Activated B cell treated with CpG ODN at 0.5 μM for 24 hours (primary cell): ENCODE measurements at regions of chr2 and their contacts with region 1.

Region 1: GRCh38 chr2:75466708-75467311 is 93.9 kb downstream of the EVA1A start:
- DNase-seq: peak; percentile 17
- ATAC-seq: no peak
- H3K4me3 Mint-ChIP-seq: no peak overlapping the region
- H3K27ac Mint-ChIP-seq: no peak overlapping the region
- H3K4me1 Mint-ChIP-seq: peaks cover 3% of the 10 kb centered on the region
- H3K27me3 Mint-ChIP-seq: peaks cover 13% of the 10 kb centered on the region
- CTCF ChIP-seq: peak; percentile 77

Region 2: DNA sequence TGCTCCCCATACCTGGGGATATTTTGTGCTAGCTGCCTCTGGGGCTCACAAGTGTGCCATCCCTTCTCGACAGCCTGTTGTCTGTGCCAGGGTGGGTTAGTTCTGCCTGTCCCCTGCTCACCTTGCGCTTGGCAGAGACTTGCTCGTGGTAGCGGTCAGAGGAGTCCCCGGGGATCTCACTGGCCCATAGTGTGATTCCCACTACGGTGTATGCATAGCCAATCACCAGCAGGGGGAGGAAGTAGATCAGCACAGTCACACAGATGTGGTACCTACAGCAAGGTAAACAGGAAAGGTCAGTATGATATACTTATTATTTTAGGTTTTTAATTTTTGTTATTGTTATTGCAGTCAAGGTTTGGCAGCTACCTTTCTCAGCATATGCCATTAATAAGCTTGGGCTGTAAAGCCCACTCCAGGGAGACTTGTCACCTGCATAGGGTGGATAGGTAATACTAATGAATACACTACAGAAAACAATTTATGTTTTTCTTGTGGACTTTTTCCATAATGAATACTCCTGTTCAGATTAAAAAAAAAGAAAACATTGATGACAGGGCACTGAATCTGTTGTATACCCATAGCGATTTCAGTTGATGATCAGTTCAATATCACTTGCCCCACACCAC is 413.2 kb before region 1 on chr2:
- CTCF ChIA-PET with region 1: interaction called, 3 read pairs
- POLR2A ChIA-PET with region 1: no interaction called
- intact Hi-C with region 1: loop called (anchors 1 kb)
- DNase-seq: no peak
- ATAC-seq: peak; percentile 62
- H3K4me3 Mint-ChIP-seq: no peak overlapping the region
- H3K27ac Mint-ChIP-seq: no peak overlapping the region
- H3K4me1 Mint-ChIP-seq: no peaks in the 10 kb centered on the region
- H3K27me3 Mint-ChIP-seq: no peaks in the 10 kb centered on the region
- CTCF ChIP-seq: no peak

Region 3: DNA sequence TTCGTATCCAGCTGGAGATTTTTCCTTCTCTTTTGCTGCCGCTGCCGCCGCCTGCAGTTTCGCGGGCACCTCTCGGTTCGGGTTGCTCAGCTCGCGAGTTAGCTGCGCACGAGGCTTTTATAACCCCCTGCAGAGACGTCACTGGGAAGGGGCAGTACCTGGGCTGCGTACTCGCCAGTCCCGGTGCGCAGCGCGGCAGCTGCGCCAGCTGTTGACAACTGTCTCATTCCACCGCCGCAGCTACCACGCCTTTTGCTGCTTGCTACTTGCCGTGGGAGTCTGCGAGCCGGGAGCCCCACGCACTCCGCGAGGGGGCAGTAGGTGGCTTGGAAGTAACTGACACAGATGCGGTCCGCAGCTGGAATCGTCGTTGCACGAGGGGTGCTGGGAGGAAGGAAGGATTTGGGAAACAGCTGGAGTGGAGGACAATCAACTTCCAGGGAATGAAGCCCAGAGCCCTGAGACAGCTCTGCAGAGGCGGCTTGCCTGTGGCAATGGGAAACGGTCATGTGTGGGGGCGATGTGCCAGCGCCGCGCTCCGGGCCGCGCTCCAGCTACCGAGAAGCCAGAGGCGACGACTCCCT is 267.3 kb before region 1 on chr2 and contains the start of gene TACR1:
- CTCF ChIA-PET with region 1: interaction called, 44 read pairs
- POLR2A ChIA-PET with region 1: no interaction called
- intact Hi-C with region 1: loop called (anchors 1 kb)
- DNase-seq: peak; percentile 55
- ATAC-seq: peak; percentile 79
- H3K4me3 Mint-ChIP-seq: peak within 1 kb of the TSS; percentile 81
- H3K27ac Mint-ChIP-seq: no peak within 1 kb of the TSS
- H3K4me1 Mint-ChIP-seq: peaks cover 20% of the 10 kb centered on the region
- H3K27me3 Mint-ChIP-seq: peaks cover 61% of the 10 kb centered on the region
- CTCF ChIP-seq: peak; percentile 43
- total RNA-seq, gene TACR1: not detected in 2 replicates

Region 4: GRCh38 chr2:75432761-75433361 is 33.9 kb before region 1 on chr2:
- CTCF ChIA-PET with region 1: interaction called, 6 read pairs
- POLR2A ChIA-PET with region 1: no interaction called
- intact Hi-C with region 1: loop called (anchors 2 kb)
- DNase-seq: peak; percentile 24
- ATAC-seq: peak; percentile 69
- H3K4me3 Mint-ChIP-seq: peak overlapping the region; percentile 60
- H3K27ac Mint-ChIP-seq: peak overlapping the region; percentile 83
- H3K4me1 Mint-ChIP-seq: peaks cover 57% of the 10 kb centered on the region
- H3K27me3 Mint-ChIP-seq: no peaks in the 10 kb centered on the region
- CTCF ChIP-seq: no peak

Region 5: GRCh38 chr2:75627895-75628504 is 161.2 kb after region 1 on chr2:
- CTCF ChIA-PET with region 1: no interaction called
- POLR2A ChIA-PET with region 1: no interaction called
- intact Hi-C with region 1: loop called (anchors 1 kb)
- DNase-seq: peak; percentile 38
- ATAC-seq: peak; percentile 75
- H3K4me3 Mint-ChIP-seq: no peak overlapping the region
- H3K27ac Mint-ChIP-seq: no peak overlapping the region
- H3K4me1 Mint-ChIP-seq: peaks cover 2% of the 10 kb centered on the region
- H3K27me3 Mint-ChIP-seq: peaks cover 30% of the 10 kb centered on the region
- CTCF ChIP-seq: peak; percentile 91